ENCODE measurements at regions of chr15 and their contacts with region 1.

Region 1: DNA sequence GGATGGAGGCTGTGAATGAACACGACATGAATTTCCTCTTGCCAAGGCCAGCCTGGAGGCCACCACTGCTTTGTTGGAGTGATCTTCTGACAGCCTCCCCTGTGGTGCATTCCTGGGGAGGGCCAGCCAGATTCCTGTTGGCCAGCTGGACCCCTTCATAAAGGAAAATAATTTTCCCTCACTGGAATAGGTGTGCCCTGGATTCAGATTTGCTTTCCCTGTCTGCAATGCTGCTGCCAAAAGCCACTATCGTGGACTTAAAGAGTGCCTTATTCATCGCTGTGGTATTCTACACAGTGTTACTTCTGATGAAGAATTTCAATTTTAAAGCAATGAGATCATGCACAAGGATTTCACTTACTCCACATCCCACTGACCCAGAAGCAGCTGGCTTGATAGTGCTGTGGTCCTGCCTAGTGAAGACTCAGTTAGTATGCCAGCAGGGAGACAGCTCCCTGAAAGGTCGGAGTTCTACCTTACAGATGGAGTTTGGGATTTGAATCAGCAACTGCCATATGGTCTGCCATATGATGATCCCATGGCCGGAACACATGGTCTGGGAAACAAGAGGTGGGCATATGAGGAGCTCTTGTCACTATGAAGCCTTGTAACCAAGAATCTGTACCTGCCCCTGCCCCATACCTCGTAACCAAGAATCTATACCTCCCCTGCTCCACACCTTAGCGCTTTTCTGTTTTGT is 145.2 kb downstream of the KLF13 start:
- DNase-seq: peak in 1 of 2 donors; percentile 41
- H3K4me3 ChIP-seq: no peak overlapping the region
- H3K27ac ChIP-seq: no peak overlapping the region
- H3K4me1 ChIP-seq: peaks cover 0 to 25% (median 13%) of the 10 kb centered on the region in 4 donors
- H3K27me3 ChIP-seq: peaks cover 0 to 4% of the 10 kb centered on the region in 2 donors
- CTCF ChIP-seq: no peak

Region 2: DNA sequence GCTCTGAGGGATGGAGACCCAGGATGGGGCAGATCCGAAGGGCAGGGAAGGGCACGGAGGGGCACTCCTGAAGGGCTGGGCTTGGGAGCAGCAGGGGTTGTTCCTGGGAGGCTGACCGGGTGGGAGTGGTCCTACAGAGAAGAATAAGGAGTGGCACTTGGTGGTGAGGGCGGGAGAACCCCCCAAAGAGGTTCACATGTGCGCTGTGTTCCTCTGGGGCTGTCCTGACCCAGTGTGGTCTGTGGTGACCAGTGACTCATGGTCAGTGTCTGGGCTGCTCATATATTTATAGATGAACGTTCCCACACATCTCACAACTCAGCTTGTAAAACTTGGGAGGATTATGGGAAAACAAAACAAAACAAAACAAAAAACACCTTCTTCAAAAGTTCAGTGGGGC is 380.4 kb before region 1 on chr15:
- intact Hi-C with region 1: no loop called
- DNase-seq: no peak
- H3K4me3 ChIP-seq: no peak overlapping the region
- H3K27ac ChIP-seq: no peak overlapping the region
- H3K4me1 ChIP-seq: no peaks in the 10 kb centered on the region
- H3K27me3 ChIP-seq: no peaks in the 10 kb centered on the region
- CTCF ChIP-seq: no peak

Region 3: GRCh38 chr15:31494786-31495185 is 22.9 kb after region 1 on chr15:
- intact Hi-C with region 1: loop called (anchors 1 kb)
- DNase-seq: no peak
- H3K4me3 ChIP-seq: no peak overlapping the region
- H3K27ac ChIP-seq: no peak overlapping the region
- H3K4me1 ChIP-seq: peaks cover 0 to 2% (median 2%) of the 10 kb centered on the region in 4 donors
- H3K27me3 ChIP-seq: no peaks in the 10 kb centered on the region
- CTCF ChIP-seq: no peak